Left ventricle myocardium superior (tissue), 1 donor: ENCODE measurements at regions of chr3 and their contacts with region 1.

Region 1: DNA sequence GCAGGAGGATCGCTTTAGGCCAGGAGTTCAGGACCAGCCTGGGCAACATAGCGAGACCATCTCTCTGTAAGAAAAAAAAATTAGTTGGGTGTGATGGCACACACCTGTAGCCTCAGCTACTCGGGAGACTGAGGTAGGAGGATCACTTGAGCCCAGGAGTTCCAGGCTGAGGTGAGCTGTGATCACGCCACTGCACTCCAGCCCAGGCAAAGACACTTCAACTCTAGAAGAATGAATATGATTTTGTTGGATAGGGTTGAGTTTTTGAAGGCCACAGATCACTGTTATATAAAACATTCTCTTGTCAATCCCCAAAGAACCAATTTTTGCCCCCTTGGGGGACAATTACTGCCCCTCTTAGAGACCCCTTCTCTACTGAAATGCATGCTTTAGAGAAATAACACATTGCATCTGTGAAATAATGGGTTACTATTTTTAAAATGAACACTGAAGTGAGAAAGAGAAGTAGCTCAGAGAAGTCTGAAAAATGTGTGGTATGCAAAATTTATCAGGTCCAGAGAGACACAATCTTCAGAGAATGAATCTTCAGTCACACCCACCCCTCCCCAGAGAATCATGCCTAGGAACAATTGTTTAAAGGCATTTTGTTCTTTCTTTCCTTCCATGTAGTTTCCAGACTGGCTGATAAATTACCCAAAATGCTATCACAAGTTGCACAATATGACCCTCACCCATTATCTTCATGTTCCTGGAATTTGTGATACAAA is 42.7 kb downstream of the METTL6 start:
- DNase-seq: no peak
- ATAC-seq: no peak

Region 2: DNA sequence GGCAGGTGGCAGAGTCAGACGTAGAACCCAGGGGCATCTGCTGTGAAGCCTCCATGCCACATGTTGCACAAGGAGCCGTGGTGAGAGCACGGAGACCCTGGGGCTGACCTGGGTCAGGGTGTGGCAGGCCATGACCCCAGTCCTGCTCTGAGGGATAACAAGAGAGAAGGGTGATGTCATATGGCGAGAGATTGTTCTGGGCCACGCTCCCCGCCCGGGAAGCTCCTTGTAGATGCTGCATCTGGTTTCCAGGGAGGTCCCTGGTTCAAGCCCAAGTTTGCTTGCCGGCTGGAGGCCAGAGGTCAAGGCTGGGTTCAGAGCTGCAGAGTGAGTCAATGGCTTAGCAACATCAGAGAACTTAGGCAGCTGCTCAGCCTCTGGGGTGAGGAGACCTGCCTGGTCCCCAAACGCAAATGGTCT is 548.6 kb before region 1 on chr3:
- intact Hi-C with region 1: no loop called
- DNase-seq: peak; percentile 85
- ATAC-seq: peak; percentile 84

Region 3: DNA sequence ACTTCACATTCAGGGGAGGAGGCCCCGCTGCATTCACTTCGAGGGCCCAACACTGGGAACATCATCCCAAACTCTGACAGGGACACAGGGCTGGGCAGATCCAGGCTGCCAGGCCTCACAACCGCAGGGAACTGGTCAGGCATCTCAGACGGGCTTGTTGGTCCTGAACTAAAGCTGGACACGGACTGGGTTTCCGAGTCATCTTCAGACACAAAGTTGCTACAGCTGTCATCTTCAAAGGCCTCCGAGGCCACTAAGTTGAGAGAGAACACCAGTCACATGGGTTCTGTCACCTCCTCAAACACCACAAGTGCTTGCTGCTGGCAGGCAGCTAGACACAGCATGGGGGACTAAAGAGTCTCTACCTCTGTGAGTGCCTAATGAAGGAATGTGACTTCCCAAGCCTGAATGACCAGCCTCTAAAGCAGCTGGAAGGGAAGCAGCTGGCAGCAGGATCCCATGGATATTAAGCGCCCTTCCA is 127.8 kb before region 1 on chr3:
- intact Hi-C with region 1: loop called (anchors 10 kb)
- DNase-seq: peak; percentile 48
- ATAC-seq: peak; percentile 80

Region 4: GRCh38 chr3:15460891-15461531 is 76.3 kb after region 1 on chr3:
- intact Hi-C with region 1: no loop called
- DNase-seq: no peak
- ATAC-seq: no peak

Region 5: DNA sequence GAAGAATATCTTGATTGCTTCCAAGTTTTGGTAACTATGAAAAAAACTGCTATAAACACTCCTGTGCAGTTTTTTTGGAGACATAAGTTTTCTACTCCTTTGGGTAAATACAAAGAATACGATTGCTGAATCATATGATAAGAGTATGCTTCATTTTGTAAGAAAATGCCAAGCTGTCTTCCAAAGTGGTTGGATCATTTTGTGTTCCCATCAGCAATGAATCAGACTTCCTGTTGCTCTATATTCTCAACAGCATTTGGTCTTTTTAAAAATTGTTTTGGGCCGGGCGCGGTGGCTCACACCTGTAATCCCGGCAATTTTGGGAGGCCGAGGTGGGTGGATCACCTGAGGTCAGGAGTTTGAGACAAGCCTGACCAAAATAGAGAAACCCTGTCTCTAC is 231.4 kb after region 1 on chr3:
- intact Hi-C with region 1: no loop called
- DNase-seq: no peak
- ATAC-seq: no peak